Heart right ventricle (tissue), 16 donors: ENCODE measurements at regions of chr5 and their contacts with region 1.

Region 1: DNA sequence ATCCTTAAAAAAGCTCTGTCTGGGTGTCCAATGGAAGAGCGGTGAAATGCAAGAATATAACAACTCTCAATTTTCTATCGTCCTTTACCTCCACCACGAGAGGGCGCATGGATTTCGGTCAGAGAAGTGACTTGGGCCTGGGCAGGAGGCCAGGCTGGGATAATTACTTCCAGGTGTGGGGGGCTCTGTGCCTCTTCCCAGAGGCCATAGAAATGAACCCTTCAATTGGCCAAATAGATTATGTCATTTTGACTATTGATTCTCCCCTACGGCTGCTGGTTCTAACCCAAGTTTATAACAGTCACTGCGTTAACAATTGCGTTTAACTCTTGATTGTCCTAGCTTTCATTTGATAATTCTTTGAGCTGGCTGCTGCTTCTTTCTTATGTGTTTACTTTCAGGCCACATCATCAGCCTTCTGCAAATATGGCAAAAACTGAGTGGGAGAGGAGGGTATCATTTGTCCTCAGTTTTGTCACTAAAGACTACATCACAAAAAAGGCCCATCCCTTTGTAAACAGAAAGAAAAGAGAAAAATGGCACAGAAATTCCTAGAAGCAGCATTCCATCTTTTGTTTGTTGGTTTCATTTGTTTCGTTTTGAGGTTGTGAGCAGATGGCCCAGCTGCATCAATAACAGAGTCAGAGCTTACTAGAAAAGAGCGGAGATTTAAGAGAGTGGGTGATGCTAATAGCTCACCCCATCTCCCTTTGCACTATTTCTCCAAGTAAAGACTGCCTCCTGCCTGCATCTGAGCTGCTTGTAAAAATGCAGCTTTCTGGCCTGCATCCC is 45.4 kb upstream of the ZFR start:
- DNase-seq: peak; percentile 77 to 85
- ATAC-seq: peak; percentile 62 to 87 (median 83)
- H3K4me3 ChIP-seq: no peak overlapping the region
- H3K27ac ChIP-seq: no peak overlapping the region
- H3K4me1 ChIP-seq: peaks cover 0 to 9% (median 0%) of the 10 kb centered on the region in 9 donors
- H3K27me3 ChIP-seq: no peaks in the 10 kb centered on the region
- CTCF ChIP-seq: peak; percentile 57 to 87 (median 78)

Region 2: GRCh38 chr5:31605920-31606319 is 884.1 kb before region 1 on chr5:
- intact Hi-C with region 1: no loop called
- DNase-seq: no peak
- ATAC-seq: peak in 1 of 8 donors; percentile 33
- H3K4me3 ChIP-seq: no peak overlapping the region
- H3K27ac ChIP-seq: no peak overlapping the region
- H3K4me1 ChIP-seq: no peaks in the 10 kb centered on the region
- H3K27me3 ChIP-seq: no peaks in the 10 kb centered on the region
- CTCF ChIP-seq: no peak

Region 3: GRCh38 chr5:32613050-32613672 is 123.2 kb after region 1 on chr5:
- intact Hi-C with region 1: loop called in 8 of 10 experiments (anchors 1 to 5 kb)
- DNase-seq: peak; percentile 73 to 85
- ATAC-seq: peak in 7 of 8 donors; percentile 65 to 80 (median 70)
- H3K4me3 ChIP-seq: no peak overlapping the region
- H3K27ac ChIP-seq: peak overlapping the region in 3 of 10 donors; percentile 2 to 54 (median 8)
- H3K4me1 ChIP-seq: peaks cover 6 to 32% (median 17%) of the 10 kb centered on the region in 9 donors
- H3K27me3 ChIP-seq: no peaks in the 10 kb centered on the region
- CTCF ChIP-seq: peak; percentile 79 to 96 (median 90)